Activated CD4-positive, alpha-beta T cell treated with anti-CD3 and anti-CD28 coated beads, Interleukin-2, amount 10 ng/mL, durations not matched to agents 24 days and 14 days (primary cell): ENCODE measurements at regions of chr3 and their contacts with region 1.

Region 1: GRCh38 chr3:69306239-69307185 is 79.4 kb downstream of the FRMD4B start:
- DNase-seq: peak; percentile 91
- H3K4me3 Mint-ChIP-seq: peak overlapping the region; percentile 62
- H3K27ac Mint-ChIP-seq: peak overlapping the region; percentile 66
- H3K4me1 Mint-ChIP-seq: peaks cover 19% of the 10 kb centered on the region
- H3K27me3 Mint-ChIP-seq: no peaks in the 10 kb centered on the region

Region 2: DNA sequence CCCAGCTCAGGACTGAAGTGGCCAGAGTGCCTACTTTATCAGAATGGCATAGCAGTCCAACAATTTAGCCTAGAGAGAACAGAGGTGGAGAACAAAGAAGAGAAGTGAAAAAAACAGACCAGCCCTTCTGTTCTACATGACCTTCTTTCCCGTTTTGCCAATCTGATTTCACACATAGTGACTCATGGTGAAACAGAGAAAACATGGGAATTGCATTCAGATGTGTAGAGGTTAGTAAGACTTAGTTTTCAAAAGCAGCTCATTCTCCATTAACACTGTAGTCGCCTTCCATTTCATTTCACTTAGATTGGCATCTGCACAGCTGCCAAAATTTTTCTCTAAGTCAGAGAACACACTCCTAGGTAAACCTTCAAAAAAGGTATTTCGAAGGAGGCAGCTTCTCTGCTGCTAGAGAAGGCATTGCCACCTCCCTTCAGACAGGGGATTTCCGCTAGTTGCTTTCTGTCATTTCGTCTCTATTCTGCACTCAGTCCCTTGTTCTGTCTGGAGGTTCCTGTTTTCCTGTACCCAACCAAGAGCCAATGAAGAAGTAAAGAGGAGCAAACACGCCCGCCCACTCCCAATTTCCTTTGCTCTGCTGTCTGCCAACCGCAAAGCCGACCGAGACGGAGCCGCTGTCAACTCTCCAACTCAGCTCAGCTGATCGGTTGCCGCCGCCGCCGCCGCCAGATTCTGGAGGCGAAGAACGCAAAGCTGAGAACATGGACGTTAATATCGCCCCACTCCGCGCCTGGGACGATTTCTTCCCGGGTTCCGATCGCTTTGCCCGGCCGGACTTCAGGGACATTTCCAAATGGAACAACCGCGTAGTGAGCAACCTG is 222.0 kb before region 1 on chr3 and contains the start of gene ARL6IP5:
- intact Hi-C with region 1: loop called (anchors 5 kb)
- DNase-seq: peak; percentile 97
- H3K4me3 Mint-ChIP-seq: peak within 1 kb of the TSS; percentile 96
- H3K27ac Mint-ChIP-seq: peak within 1 kb of the TSS; percentile 95
- H3K4me1 Mint-ChIP-seq: peaks cover 45% of the 10 kb centered on the region
- H3K27me3 Mint-ChIP-seq: no peaks in the 10 kb centered on the region
- total RNA-seq, gene ARL6IP5: 118 and 122 TPM in 2 replicates

Region 3: DNA sequence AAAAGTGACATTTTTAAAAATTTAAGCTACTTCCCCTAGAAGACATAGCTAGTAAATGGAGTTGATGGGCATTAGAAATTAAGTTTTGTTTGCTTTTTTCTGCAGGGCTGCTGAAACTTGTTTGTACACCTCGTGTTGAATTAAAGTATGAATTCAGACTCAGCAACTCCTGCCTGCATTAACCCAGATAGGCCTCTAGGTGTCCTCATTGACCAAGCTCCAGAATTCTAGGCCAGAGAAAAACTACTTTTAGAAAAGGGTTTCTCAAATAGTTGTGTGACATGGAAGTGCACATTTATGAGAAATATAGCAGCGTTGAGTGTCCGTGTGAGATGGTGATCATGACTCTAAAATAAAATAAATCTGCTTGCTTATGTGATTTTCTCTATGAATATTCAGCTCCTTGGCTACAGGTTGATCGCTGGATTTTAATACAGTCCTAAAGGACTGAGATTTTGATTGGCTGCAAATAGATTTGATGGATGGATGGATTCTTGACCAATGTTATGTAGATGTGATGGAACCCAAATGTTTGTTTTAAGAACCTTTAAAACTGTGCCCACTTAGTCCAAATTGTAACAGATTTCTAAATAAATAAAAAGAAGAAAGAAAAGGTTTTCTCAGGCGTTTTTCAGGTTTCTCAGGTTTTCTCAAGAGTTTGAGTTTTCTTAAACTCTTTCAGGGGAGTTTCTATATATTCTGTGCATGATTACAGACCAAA is 144.8 kb before region 1 on chr3:
- intact Hi-C with region 1: loop called (anchors 1 kb)
- DNase-seq: peak; percentile 81
- H3K4me3 Mint-ChIP-seq: no peak overlapping the region
- H3K27ac Mint-ChIP-seq: no peak overlapping the region
- H3K4me1 Mint-ChIP-seq: peaks cover 2% of the 10 kb centered on the region
- H3K27me3 Mint-ChIP-seq: peaks cover 6% of the 10 kb centered on the region

Region 4: DNA sequence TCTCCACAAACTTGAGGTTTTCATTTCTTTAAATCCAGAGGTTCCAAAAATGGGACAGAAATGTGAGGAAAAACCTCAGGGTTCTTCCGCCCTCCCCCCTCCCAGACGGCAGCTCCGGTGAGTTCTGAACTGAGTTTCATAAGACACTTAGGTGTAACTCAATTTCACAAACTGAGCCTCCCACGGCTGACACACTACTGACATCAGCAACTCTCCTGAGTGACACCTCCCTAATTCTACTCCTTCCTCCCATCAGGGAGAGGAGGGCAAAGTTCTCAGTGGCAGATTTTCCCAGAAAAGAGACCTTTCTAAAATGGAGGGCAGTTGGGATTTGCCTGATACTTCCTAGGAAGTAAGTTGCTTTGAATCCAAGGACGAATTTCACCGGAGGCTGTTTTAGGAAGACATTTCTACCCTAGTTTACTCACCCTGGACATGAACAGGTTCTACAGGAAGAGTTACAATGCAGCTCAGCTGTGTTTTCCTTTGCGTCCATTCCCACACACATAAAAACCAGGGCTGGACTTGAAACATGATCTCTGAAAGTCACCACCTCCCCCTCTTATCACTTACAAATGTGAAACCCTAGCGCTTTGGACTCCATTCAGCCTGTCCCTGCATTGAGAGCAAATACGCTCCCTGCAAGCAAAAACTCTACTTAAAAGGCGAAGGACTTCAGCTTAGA is 106.0 kb before region 1 on chr3:
- intact Hi-C with region 1: loop called (anchors 1 kb)
- DNase-seq: peak; percentile 83
- H3K4me3 Mint-ChIP-seq: peak overlapping the region; percentile 90
- H3K27ac Mint-ChIP-seq: peak overlapping the region; percentile 99
- H3K4me1 Mint-ChIP-seq: peaks cover 59% of the 10 kb centered on the region
- H3K27me3 Mint-ChIP-seq: no peaks in the 10 kb centered on the region

Region 5: GRCh38 chr3:69240651-69241568 is 65.6 kb before region 1 on chr3:
- intact Hi-C with region 1: loop called (anchors 5 kb)
- DNase-seq: no peak
- H3K4me3 Mint-ChIP-seq: no peak overlapping the region
- H3K27ac Mint-ChIP-seq: no peak overlapping the region
- H3K4me1 Mint-ChIP-seq: peaks cover 16% of the 10 kb centered on the region
- H3K27me3 Mint-ChIP-seq: no peaks in the 10 kb centered on the region

Region 6: GRCh38 chr3:69288161-69288895 is 18.2 kb before region 1 on chr3:
- intact Hi-C with region 1: loop called (anchors 1 kb)
- DNase-seq: no peak
- H3K4me3 Mint-ChIP-seq: peak overlapping the region; percentile 16
- H3K27ac Mint-ChIP-seq: peak overlapping the region; percentile 58
- H3K4me1 Mint-ChIP-seq: peaks cover 10% of the 10 kb centered on the region
- H3K27me3 Mint-ChIP-seq: no peaks in the 10 kb centered on the region

Region 7: DNA sequence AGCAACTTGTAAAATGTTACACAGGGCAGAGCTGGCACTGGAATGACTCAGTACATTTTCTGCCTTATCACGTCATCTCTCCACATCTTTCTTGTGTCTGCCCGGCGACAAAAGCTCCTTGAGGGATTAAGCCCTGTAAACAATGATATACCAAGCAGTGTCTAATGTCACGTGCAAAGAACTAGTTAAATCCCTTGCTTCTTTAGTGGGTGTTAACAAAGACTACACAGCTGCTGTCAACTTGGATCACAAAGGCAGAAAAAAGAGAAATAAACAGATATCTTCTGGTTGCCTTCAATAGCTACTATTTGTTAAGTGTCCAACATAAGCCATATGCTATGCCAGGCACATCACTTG is 127.4 kb after region 1 on chr3:
- intact Hi-C with region 1: loop called (anchors 1 kb)
- DNase-seq: no peak
- H3K4me3 Mint-ChIP-seq: no peak overlapping the region
- H3K27ac Mint-ChIP-seq: peak overlapping the region; percentile 76
- H3K4me1 Mint-ChIP-seq: peaks cover 40% of the 10 kb centered on the region
- H3K27me3 Mint-ChIP-seq: peaks cover 3% of the 10 kb centered on the region